Kidney (tissue), 22 donors: ENCODE measurements at regions of chr10 and their contacts with region 1.

Region 1: GRCh38 chr10:93115661-93116383 is 42.1 kb downstream of the CYP26A1 start:
- DNase-seq: peak in 4 of 5 donors; percentile 34 to 52 (median 40)
- H3K4me3 ChIP-seq: no peak overlapping the region
- H3K27ac ChIP-seq: no peak overlapping the region
- H3K4me1 ChIP-seq: no peaks in the 10 kb centered on the region
- H3K27me3 ChIP-seq: no peaks in the 10 kb centered on the region
- CTCF ChIP-seq: peak; percentile 61

Region 2: DNA sequence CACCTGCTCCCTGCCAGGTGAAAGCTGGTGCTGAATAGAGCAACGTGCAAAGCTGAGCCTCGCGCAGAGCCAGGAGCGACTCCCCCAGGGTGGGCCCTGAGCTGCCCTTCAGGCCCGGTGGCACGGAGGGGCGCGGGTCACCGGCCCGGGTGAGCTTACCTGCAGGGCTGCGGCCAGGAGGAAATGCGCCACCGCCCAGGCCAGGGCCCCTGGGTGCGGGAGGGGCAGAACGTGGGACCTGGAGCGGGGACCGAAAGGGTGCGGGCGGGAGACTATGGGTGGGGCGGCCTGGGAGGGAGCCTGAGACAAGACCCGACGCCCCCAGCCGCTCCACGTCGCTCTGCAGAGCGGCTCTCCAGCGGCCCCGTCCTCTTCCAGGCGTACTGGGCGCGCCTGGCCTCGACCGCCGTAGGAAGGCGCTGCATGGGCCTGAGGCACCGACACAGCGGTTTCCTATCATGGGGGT is 1070.1 kb before region 1 on chr10:
- intact Hi-C with region 1: no loop called
- DNase-seq: peak in 4 of 5 donors; percentile 14 to 76 (median 18)
- H3K4me3 ChIP-seq: no peak overlapping the region
- H3K27ac ChIP-seq: no peak overlapping the region
- H3K4me1 ChIP-seq: peaks cover 0 to 3% (median 0%) of the 10 kb centered on the region in 3 donors
- H3K27me3 ChIP-seq: no peaks in the 10 kb centered on the region
- CTCF ChIP-seq: no peak

Region 3: DNA sequence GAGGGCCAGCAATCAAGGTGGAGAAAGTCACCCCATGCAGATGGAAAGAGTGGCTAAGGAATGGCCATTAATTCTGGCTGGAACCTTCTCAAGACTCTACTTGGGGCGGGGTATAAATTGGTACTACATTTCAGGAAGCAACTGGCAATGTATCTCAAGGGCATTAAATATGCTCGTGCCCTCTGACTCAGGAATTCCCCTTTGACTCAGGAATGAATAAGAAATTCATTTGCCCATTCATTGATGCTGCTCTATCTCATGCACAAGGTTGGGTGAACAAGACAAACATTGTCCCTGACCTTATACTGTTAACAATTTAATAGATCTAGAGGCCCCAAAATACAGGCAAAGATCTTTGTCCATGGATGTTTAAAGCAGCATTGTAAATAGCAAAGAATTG is 178.2 kb after region 1 on chr10:
- intact Hi-C with region 1: loop called (anchors 10 kb)
- DNase-seq: no peak
- H3K4me3 ChIP-seq: no peak overlapping the region
- H3K27ac ChIP-seq: no peak overlapping the region
- H3K4me1 ChIP-seq: no peaks in the 10 kb centered on the region
- H3K27me3 ChIP-seq: no peaks in the 10 kb centered on the region
- CTCF ChIP-seq: no peak